HAP-1 (cell line): ENCODE measurements at regions of chr19 and their contacts with region 1.

Region 1: DNA sequence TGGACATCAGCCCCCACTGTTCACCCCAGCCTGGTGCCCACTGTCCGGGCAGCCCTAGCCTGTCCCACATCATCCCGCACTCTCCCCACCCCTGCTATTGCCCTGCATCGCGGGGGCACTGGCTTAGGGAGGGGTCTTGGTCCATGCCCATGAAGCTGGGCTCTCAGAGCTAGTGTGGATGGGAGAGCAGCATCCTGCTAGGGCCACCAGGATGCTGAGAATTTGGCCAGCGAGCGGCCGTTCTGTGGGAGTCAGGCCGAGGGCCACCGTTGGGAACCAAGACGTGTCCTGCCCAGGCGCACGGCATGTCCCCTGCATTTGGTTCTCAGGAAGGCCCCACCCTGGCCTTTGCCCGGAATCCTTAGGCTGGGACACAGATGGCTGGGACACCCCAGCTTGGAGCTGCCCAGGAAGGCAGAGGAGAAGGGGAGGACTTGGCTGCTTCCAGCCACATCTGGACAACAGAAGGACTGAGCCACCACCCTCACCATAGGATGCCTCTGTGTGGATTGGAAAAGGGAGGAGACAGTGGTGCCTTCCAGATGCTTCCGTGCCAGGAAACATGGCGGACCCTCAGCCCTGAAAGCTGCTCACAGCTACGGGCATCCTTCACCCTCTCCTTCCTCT is 14.6 kb downstream of the ADGRE5 start:
- DNase-seq: no peak
- H3K4me3 ChIP-seq: no peak overlapping the region
- H3K4me1 ChIP-seq: no peaks in the 10 kb centered on the region
- H3K27me3 ChIP-seq: no peaks in the 10 kb centered on the region

Region 2: DNA sequence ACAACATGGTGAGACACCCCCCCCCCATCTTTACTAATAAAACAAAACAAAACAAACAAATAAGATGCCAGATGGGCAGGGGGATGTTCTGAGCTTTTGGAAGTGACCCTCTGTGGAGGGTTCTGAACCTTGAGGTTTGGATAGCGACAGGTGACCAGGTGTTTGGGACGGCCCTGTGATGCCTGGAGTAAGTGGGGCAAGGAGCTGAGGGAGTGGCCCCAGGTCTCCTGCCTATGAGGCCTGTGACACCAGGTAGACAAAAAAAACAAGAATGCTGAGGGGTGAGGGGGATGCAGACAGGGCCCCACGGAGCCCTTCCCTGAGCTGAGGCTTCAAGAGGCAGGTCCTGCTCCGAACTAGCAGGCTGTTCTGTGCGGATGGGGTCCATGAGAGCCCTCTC is 373.4 kb after region 1 on chr19:
- in situ Hi-C with region 1: loop called (anchors 5 kb)
- DNase-seq: no peak
- H3K4me3 ChIP-seq: no peak overlapping the region
- H3K4me1 ChIP-seq: no peaks in the 10 kb centered on the region
- H3K27me3 ChIP-seq: no peaks in the 10 kb centered on the region